Head of caudate nucleus (tissue), 42 donors: ENCODE measurements at regions of chr9 and their contacts with region 1.

Region 1: DNA sequence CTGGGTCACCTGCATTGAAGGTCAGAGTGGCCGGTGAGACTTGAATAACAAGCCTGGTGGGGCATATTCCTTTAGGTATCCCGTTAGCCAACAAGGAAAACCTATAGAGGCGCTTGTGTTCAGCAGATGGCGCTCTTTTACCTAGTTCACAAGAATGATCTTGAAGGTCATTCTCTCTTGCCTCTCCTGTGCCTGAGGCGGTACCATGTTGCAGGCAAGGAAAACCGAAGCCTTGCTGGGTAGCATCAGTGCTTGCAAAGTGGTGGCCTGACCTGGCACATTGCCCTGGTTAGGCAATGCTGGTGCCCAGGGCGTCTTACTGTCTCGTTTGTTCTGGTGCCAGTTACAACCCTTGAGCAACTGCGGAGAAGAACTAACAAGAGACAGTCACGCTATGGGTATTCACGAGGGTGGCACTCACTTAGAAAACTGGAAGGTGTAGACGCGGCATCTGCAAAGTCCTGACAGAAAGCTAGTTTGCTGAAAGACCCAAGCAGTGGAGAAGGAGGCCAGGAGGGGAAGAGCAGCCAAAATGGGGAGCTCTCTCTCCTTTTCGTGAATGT is 56.7 kb downstream of the AOPEP start:
- DNase-seq: peak; percentile 21 to 93 (median 76)

Region 2: DNA sequence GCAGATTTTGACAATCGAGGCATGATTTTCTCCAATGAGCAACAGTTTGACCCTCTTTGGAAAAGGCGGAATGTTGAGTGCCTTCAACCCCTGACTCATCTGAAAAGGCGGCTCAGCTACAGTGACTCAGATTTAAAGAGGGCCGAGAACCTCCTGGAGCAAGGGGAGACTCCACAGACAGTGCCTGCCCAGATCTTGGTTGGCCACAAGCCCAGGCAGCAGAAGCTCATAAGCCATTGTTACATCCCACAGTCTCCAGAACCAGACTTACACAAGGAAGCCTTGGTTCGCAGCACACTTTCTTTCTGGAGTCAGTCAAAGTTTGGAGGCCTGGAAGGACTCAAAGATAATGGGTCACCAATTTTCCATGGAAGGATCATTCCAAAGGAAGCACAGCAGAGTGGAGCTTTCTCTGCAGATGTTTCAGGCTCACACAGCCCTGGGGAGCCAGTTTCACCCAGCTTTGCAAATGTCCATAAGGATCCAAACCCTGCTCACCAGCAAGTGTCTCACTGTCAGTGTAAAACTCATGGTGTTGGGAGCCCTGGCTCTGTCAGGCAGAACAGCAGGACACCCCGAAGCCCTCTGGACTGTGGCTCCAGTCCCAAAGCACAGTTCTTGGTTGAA is 685.3 kb before region 1 on chr9:
- intact Hi-C with region 1: no loop called
- DNase-seq: peak in 4 of 42 donors; percentile 30 to 61 (median 35)

Region 3: DNA sequence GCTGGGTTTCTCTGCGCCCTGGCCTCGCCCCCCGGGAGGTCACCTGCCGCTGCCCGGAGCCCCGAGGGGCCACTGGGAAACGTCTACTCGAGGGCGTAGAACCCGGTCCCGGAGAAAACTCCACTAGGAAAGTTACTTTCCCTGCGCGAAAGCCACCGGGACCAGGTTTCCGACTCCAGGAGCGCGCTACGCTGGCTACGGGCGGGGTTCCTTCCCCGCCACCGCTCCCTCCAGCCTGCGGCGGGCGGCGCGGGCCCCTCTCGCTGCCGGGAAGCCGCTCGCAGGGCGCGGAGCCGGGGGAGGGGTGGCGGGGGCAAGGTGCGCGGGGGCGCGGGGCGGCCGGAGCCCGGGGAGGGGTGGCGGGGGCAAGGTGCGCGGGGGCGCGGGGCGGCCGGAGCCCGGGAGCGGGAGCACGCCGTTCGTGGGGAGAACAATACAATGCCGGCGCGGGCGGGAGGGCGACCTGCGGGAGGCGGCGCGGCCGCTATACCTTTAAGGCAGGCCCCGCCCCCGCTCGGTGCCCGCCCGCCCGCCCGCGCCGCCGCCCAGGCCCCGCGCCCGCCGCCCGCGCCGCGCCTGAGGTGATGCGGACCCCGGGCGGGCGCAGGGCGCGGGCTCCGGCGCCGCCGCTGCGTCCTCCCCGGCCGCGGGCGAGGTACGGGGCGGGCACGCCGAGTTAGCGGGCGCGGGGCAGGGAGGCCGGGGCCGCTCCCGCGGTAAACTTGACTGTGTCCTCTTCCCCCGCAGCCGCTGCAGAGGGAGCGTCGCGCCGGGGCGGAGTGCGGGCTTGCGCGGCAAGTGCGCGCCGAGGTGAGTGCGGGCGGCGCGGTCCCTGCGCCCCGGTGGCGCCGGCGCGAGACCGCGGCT is 221.5 kb after region 1 on chr9:
- intact Hi-C with region 1: loop called (anchors 5 kb)
- DNase-seq: peak in 30 of 42 donors; percentile 34 to 77 (median 57)